ENCODE measurements at regions of chr12 and their contacts with region 1.

Region 1: GRCh38 chr12:65232476-65233077 is 45.9 kb upstream of the MSRB3 start:
- DNase-seq: no peak
- H3K4me3 Mint-ChIP-seq: no peak overlapping the region
- H3K27ac Mint-ChIP-seq: no peak overlapping the region
- H3K4me1 Mint-ChIP-seq: peaks cover 8% of the 10 kb centered on the region
- H3K27me3 Mint-ChIP-seq: no peaks in the 10 kb centered on the region

Region 2: GRCh38 chr12:64890873-64891468 is 341.6 kb before region 1 on chr12:
- CTCF ChIA-PET with region 1: interaction called, 17 read pairs
- DNase-seq: no peak
- H3K4me3 Mint-ChIP-seq: no peak overlapping the region
- H3K27ac Mint-ChIP-seq: no peak overlapping the region
- H3K4me1 Mint-ChIP-seq: no peaks in the 10 kb centered on the region
- H3K27me3 Mint-ChIP-seq: peaks cover 12% of the 10 kb centered on the region

Region 3: GRCh38 chr12:65121049-65121955 is 111.3 kb before region 1 on chr12 and contains the start of gene WIF1:
- CTCF ChIA-PET with region 1: interaction called, 10 read pairs
- DNase-seq: peak; percentile 38
- H3K4me3 Mint-ChIP-seq: peak within 1 kb of the TSS; percentile 57
- H3K27ac Mint-ChIP-seq: no peak within 1 kb of the TSS
- H3K4me1 Mint-ChIP-seq: peaks cover 11% of the 10 kb centered on the region
- H3K27me3 Mint-ChIP-seq: peaks cover 42% of the 10 kb centered on the region

Region 4: DNA sequence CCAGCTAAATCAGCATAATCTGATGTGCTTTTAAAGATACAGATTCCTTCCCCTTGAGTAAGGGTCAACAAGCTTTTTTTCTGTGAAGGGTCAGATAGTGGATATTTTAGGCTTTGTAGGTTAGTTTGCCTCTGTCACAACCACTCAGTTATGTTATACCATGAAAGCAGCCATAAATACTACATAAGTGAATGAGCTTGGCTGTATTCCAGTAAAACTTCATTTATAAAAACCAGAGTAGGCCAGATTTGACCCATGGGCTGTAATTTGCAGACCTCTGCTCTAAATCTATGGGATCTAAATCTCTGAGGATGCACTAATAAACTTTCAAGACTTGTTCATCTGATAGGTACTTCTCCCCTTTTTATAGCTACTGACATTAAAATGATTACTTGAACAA is 15.5 kb before region 1 on chr12:
- CTCF ChIA-PET with region 1: interaction called, 13 read pairs
- DNase-seq: no peak
- H3K4me3 Mint-ChIP-seq: no peak overlapping the region
- H3K27ac Mint-ChIP-seq: no peak overlapping the region
- H3K4me1 Mint-ChIP-seq: peaks cover 19% of the 10 kb centered on the region
- H3K27me3 Mint-ChIP-seq: no peaks in the 10 kb centered on the region

Measured in activated naive CD4-positive, alpha-beta T cell treated with anti-CD3 and anti-CD28 coated beads, Interleukin-2, amount 10 ng/mL, durations not matched to agents 7 days and 5 days (primary cell).